ENCODE measurements at regions of chr3 and their contacts with region 1.

Region 1: DNA sequence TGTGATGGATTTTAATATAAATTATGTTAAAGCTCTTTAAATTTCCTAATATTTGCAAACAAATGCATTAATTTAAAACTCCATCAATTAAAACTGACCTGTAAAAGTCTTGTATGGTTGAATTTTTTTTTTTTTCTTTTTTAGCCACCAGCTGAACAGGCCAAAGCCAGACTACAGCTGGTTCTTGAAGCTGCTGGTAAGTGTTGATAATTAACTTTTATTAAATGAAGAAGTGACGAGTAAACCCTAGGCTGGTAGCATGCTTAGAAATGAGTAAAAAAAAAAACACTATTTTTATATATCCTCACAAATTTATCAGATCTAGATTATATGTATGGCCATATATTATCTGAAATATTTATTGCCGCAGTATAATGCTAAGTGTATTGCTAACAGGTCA is 216.3 kb upstream of the MLF1 start:
- DNase-seq: no peak
- ATAC-seq: no peak
- H3K4me3 ChIP-seq: no peak overlapping the region
- H3K4me3 Mint-ChIP-seq: no peak overlapping the region
- H3K27ac ChIP-seq: no peak overlapping the region
- H3K27ac Mint-ChIP-seq: no peak overlapping the region
- H3K4me1 ChIP-seq: no peaks in the 10 kb centered on the region
- H3K4me1 Mint-ChIP-seq: peaks cover 0 to 11% (median 6%) of the 10 kb centered on the region in 7 donors
- H3K27me3 ChIP-seq: no peaks in the 10 kb centered on the region
- H3K27me3 Mint-ChIP-seq: no peaks in the 10 kb centered on the region

Region 2: DNA sequence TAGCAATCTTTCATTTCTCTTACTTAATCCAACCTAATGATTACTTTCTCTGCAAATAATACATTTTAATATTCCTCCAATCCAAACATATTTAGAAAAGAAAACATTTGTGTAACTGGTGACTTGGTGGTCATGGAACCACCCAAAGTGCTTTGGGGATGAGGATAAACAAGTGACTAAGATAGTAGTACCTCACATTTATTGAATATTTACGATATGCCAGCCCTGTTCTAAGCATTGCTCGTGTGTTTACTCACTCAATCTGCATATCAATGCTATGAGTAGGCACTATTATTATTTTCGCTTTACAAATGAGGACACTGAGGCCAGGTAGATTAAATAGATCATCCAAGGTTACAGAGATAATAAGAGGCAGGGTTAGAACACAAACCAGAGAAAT is 438.0 kb before region 1 on chr3:
- CTCF ChIA-PET with region 1: no interaction called
- POLR2A ChIA-PET with region 1: interaction called, 11 read pairs
- intact Hi-C with region 1: no loop called
- DNase-seq: no peak
- ATAC-seq: no peak
- H3K4me3 ChIP-seq: no peak overlapping the region
- H3K4me3 Mint-ChIP-seq: no peak overlapping the region
- H3K27ac ChIP-seq: no peak overlapping the region
- H3K27ac Mint-ChIP-seq: no peak overlapping the region
- H3K4me1 ChIP-seq: no peaks in the 10 kb centered on the region
- H3K4me1 Mint-ChIP-seq: no peaks in the 10 kb centered on the region
- H3K27me3 ChIP-seq: no peaks in the 10 kb centered on the region
- H3K27me3 Mint-ChIP-seq: no peaks in the 10 kb centered on the region

Region 3: GRCh38 chr3:158267015-158267414 is 87.7 kb before region 1 on chr3:
- CTCF ChIA-PET with region 1: no interaction called
- POLR2A ChIA-PET with region 1: no interaction called
- intact Hi-C with region 1: no loop called
- DNase-seq: no peak
- ATAC-seq: no peak
- H3K4me3 ChIP-seq: no peak overlapping the region
- H3K4me3 Mint-ChIP-seq: no peak overlapping the region
- H3K27ac ChIP-seq: no peak overlapping the region
- H3K27ac Mint-ChIP-seq: no peak overlapping the region
- H3K4me1 ChIP-seq: no peaks in the 10 kb centered on the region
- H3K4me1 Mint-ChIP-seq: no peaks in the 10 kb centered on the region
- H3K27me3 ChIP-seq: no peaks in the 10 kb centered on the region
- H3K27me3 Mint-ChIP-seq: no peaks in the 10 kb centered on the region

Region 4: GRCh38 chr3:159586571-159587202 is 1232.0 kb after region 1 on chr3:
- CTCF ChIA-PET with region 1: no interaction called
- POLR2A ChIA-PET with region 1: no interaction called
- intact Hi-C with region 1: no loop called
- DNase-seq: no peak
- ATAC-seq: no peak
- H3K4me3 ChIP-seq: no peak overlapping the region
- H3K4me3 Mint-ChIP-seq: no peak overlapping the region
- H3K27ac ChIP-seq: no peak overlapping the region
- H3K27ac Mint-ChIP-seq: no peak overlapping the region
- H3K4me1 ChIP-seq: no peaks in the 10 kb centered on the region
- H3K4me1 Mint-ChIP-seq: no peaks in the 10 kb centered on the region
- H3K27me3 ChIP-seq: no peaks in the 10 kb centered on the region
- H3K27me3 Mint-ChIP-seq: peaks cover 0 to 5% (median 0%) of the 10 kb centered on the region in 5 donors

Measured in naive thymus-derived CD4-positive, alpha-beta T cell (primary cell).